T-cell (primary cell): ENCODE measurements at regions of chr4 and their contacts with region 1.

Region 1: GRCh38 chr4:24137963-24138601 is 248.2 kb upstream of the PPARGC1A start:
- DNase-seq: no peak
- ATAC-seq: no peak
- H3K4me3 ChIP-seq: no peak overlapping the region
- H3K4me3 Mint-ChIP-seq: no peak overlapping the region
- H3K27ac ChIP-seq: no peak overlapping the region
- H3K27ac Mint-ChIP-seq: no peak overlapping the region
- H3K4me1 ChIP-seq: no peaks in the 10 kb centered on the region
- H3K4me1 Mint-ChIP-seq: no peaks in the 10 kb centered on the region
- H3K27me3 ChIP-seq: no peaks in the 10 kb centered on the region
- H3K27me3 Mint-ChIP-seq: no peaks in the 10 kb centered on the region

Region 2: DNA sequence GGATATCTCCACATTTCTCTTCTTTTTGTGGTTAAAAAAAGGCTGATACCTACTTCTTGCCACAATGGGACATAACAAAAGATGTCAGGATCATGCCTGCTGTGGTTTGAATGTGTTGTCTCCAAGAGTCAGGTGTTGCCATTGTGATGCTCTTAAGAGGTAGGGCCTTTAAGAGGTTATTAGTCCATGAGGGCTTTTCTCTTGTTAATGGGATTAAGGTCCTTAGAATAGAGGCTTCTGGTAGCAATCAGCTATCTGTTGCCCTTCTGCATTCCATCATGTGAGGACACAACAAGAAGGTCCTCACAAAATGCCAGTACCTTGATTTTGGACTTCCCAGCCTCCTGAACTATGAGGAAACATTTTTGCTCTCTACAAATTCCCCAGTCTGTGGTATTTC is 1253.9 kb before region 1 on chr4:
- CTCF ChIA-PET with region 1: no interaction called
- POLR2A ChIA-PET with region 1: no interaction called
- DNase-seq: no peak
- ATAC-seq: no peak
- H3K4me3 ChIP-seq: no peak overlapping the region
- H3K4me3 Mint-ChIP-seq: no peak overlapping the region
- H3K27ac ChIP-seq: no peak overlapping the region
- H3K27ac Mint-ChIP-seq: no peak overlapping the region
- H3K4me1 ChIP-seq: no peaks in the 10 kb centered on the region
- H3K4me1 Mint-ChIP-seq: no peaks in the 10 kb centered on the region
- H3K27me3 ChIP-seq: no peaks in the 10 kb centered on the region
- H3K27me3 Mint-ChIP-seq: peaks cover 0 to 3% of the 10 kb centered on the region in 2 donors

Region 3: GRCh38 chr4:24105183-24106038 is 32.7 kb before region 1 on chr4:
- CTCF ChIA-PET with region 1: interaction called in 1 of 2 experiments, 11 read pairs
- POLR2A ChIA-PET with region 1: no interaction called
- DNase-seq: no peak
- ATAC-seq: no peak
- H3K4me3 ChIP-seq: no peak overlapping the region
- H3K4me3 Mint-ChIP-seq: no peak overlapping the region
- H3K27ac ChIP-seq: no peak overlapping the region
- H3K27ac Mint-ChIP-seq: no peak overlapping the region
- H3K4me1 ChIP-seq: no peaks in the 10 kb centered on the region
- H3K4me1 Mint-ChIP-seq: no peaks in the 10 kb centered on the region
- H3K27me3 ChIP-seq: no peaks in the 10 kb centered on the region
- H3K27me3 Mint-ChIP-seq: no peaks in the 10 kb centered on the region